B cell (primary cell): ENCODE measurements at regions of chr7 and their contacts with region 1.

Region 1: DNA sequence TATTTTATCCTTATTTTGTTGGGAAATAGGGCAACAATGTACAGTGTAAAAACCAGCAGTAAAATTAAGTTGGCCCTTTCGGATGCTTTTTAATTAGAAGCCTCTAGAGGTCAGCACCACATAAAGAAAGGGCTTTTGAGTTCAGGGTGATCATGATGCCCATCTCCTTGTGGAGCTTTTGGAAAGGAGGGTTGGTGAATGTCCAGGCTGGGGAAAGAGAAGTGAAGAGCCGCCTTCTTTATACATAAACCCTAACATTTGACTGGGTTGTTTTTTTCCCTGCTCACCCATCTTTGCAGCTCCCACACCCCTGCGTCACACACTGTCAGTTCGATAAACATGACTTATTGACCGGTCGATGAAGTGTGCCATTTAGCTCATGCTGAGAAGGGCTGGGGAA is 29.8 kb downstream of the MTURN start:
- DNase-seq: peak; percentile 61
- ATAC-seq: peak; percentile 39
- H3K4me3 ChIP-seq: no peak overlapping the region
- H3K4me3 Mint-ChIP-seq: peak overlapping the region; percentile 38
- H3K27ac ChIP-seq: no peak overlapping the region
- H3K27ac Mint-ChIP-seq: no peak overlapping the region
- H3K4me1 ChIP-seq: peaks cover 31 to 37% of the 10 kb centered on the region in 2 donors
- H3K4me1 Mint-ChIP-seq: peaks cover 41% of the 10 kb centered on the region
- H3K27me3 ChIP-seq: no peaks in the 10 kb centered on the region
- H3K27me3 Mint-ChIP-seq: no peaks in the 10 kb centered on the region
- CTCF ChIP-seq: peak; percentile 76

Region 2: DNA sequence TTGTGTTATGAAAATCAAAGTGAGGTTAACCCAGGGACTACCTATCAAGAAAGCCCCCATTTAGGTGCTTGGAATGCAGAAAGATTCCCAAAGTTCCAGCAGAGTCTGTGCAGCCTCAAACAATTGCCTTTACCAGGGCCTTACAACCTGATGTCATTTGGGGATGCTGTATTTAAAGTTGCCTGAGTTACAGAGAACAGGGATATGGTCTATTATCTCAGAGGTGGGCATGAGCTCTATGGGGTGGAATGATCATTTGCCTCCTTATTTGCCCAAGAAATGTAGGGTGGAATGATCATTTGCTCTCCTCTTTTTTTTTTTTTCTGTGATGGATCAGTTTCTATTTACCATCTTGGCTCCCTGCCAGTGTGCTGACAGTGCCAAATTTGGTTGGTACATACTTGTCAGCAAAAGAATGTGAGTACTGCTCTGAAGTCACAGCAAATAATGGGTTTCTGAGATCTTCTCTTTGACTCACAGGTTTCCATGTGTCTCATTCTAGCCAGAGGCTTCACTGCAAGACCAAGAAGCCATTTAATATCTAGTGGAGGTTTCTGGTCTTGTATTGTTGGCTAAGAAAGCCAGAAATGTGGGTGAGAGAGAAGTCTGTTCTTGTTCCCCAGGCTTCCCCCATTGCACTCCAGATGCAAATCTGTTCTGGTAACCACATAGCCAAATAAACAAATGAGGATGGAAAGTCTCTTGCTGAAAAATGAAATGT is 74.3 kb after region 1 on chr7:
- CTCF ChIA-PET with region 1: interaction called, 15 read pairs
- POLR2A ChIA-PET with region 1: no interaction called
- intact Hi-C with region 1: no loop called
- DNase-seq: peak; percentile 60
- ATAC-seq: peak; percentile 77
- H3K4me3 ChIP-seq: no peak overlapping the region
- H3K4me3 Mint-ChIP-seq: peak overlapping the region; percentile 84
- H3K27ac ChIP-seq: no peak overlapping the region
- H3K27ac Mint-ChIP-seq: peak overlapping the region; percentile 88
- H3K4me1 ChIP-seq: peaks cover 37 to 45% of the 10 kb centered on the region in 2 donors
- H3K4me1 Mint-ChIP-seq: peaks cover 36% of the 10 kb centered on the region
- H3K27me3 ChIP-seq: no peaks in the 10 kb centered on the region
- H3K27me3 Mint-ChIP-seq: no peaks in the 10 kb centered on the region
- CTCF ChIP-seq: no peak

Region 3: GRCh38 chr7:30276203-30276900 is 111.8 kb after region 1 on chr7:
- CTCF ChIA-PET with region 1: interaction called, 22 read pairs
- POLR2A ChIA-PET with region 1: no interaction called
- intact Hi-C with region 1: loop called (anchors 5 kb)
- DNase-seq: peak; percentile 66
- ATAC-seq: peak; percentile 72
- H3K4me3 ChIP-seq: no peak overlapping the region
- H3K4me3 Mint-ChIP-seq: no peak overlapping the region
- H3K27ac ChIP-seq: no peak overlapping the region
- H3K27ac Mint-ChIP-seq: no peak overlapping the region
- H3K4me1 ChIP-seq: peaks cover 8 to 9% of the 10 kb centered on the region in 2 donors
- H3K4me1 Mint-ChIP-seq: peaks cover 16% of the 10 kb centered on the region
- H3K27me3 ChIP-seq: no peaks in the 10 kb centered on the region
- H3K27me3 Mint-ChIP-seq: no peaks in the 10 kb centered on the region
- CTCF ChIP-seq: peak; percentile 70

Region 4: GRCh38 chr7:30412810-30413504 is 248.4 kb after region 1 on chr7:
- CTCF ChIA-PET with region 1: interaction called, 8 read pairs
- POLR2A ChIA-PET with region 1: no interaction called
- intact Hi-C with region 1: loop called (anchors 2 kb)
- DNase-seq: peak; percentile 35
- ATAC-seq: no peak
- H3K4me3 ChIP-seq: no peak overlapping the region
- H3K4me3 Mint-ChIP-seq: no peak overlapping the region
- H3K27ac ChIP-seq: peak overlapping the region in 1 of 2 donors; percentile 2
- H3K27ac Mint-ChIP-seq: peak overlapping the region; percentile 26
- H3K4me1 ChIP-seq: peaks cover 26 to 32% of the 10 kb centered on the region in 2 donors
- H3K4me1 Mint-ChIP-seq: peaks cover 35% of the 10 kb centered on the region
- H3K27me3 ChIP-seq: no peaks in the 10 kb centered on the region
- H3K27me3 Mint-ChIP-seq: no peaks in the 10 kb centered on the region
- CTCF ChIP-seq: peak; percentile 6

Region 5: GRCh38 chr7:30564243-30564892 is 399.8 kb after region 1 on chr7:
- CTCF ChIA-PET with region 1: interaction called, 41 read pairs
- POLR2A ChIA-PET with region 1: no interaction called
- intact Hi-C with region 1: loop called (anchors 1 kb)
- DNase-seq: peak; percentile 80
- ATAC-seq: peak; percentile 93
- H3K4me3 ChIP-seq: no peak overlapping the region
- H3K4me3 Mint-ChIP-seq: no peak overlapping the region
- H3K27ac ChIP-seq: no peak overlapping the region
- H3K27ac Mint-ChIP-seq: no peak overlapping the region
- H3K4me1 ChIP-seq: no peaks in the 10 kb centered on the region
- H3K4me1 Mint-ChIP-seq: no peaks in the 10 kb centered on the region
- H3K27me3 ChIP-seq: no peaks in the 10 kb centered on the region
- H3K27me3 Mint-ChIP-seq: no peaks in the 10 kb centered on the region
- CTCF ChIP-seq: peak; percentile 92